ENCODE measurements at regions of chr17 and their contacts with region 1.

Region 1: DNA sequence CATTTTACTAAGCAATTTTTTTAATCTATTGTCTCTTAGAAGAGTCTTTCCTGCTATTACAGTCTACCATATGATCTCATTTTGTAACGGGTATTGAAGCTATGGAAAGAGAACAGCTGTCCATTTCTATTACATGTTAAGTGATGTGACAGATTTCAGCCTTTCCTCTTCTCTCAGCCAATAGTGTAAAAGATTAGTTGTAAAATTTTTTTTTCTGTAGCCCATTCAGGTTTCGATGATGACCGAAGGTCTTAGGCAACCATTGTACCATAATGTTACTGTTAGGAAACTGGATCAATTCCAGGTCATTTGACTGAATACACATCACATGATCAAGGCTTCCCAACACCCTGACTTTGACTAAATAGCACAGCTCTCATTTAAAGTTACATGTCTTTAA is 147.6 kb upstream of the HLF start:
- DNase-seq: no peak
- ATAC-seq: peak in 2 of 4 donors; percentile 26 to 58
- H3K4me3 ChIP-seq: no peak overlapping the region
- H3K27ac ChIP-seq: peak overlapping the region in 1 of 12 donors; percentile 4
- H3K4me1 ChIP-seq: peaks cover 0 to 15% (median 2%) of the 10 kb centered on the region in 12 donors
- H3K27me3 ChIP-seq: no peaks in the 10 kb centered on the region
- CTCF ChIP-seq: no peak
- POLR2A ChIP-seq: no peak

Region 2: GRCh38 chr17:55090079-55090492 is 27.1 kb before region 1 on chr17:
- intact Hi-C with region 1: no loop called
- DNase-seq: no peak
- ATAC-seq: no peak
- H3K4me3 ChIP-seq: no peak overlapping the region
- H3K27ac ChIP-seq: peak overlapping the region in 1 of 12 donors; percentile 28
- H3K4me1 ChIP-seq: peaks cover 0 to 21% (median 0%) of the 10 kb centered on the region in 12 donors
- H3K27me3 ChIP-seq: no peaks in the 10 kb centered on the region
- CTCF ChIP-seq: no peak
- POLR2A ChIP-seq: no peak

Region 3: GRCh38 chr17:55168958-55169687 is 52.0 kb after region 1 on chr17:
- intact Hi-C with region 1: loop called in 1 of 10 experiments (anchors 5 kb)
- DNase-seq: no peak
- ATAC-seq: no peak
- H3K4me3 ChIP-seq: no peak overlapping the region
- H3K27ac ChIP-seq: no peak overlapping the region
- H3K4me1 ChIP-seq: no peaks in the 10 kb centered on the region
- H3K27me3 ChIP-seq: no peaks in the 10 kb centered on the region
- CTCF ChIP-seq: no peak
- POLR2A ChIP-seq: no peak

Region 4: GRCh38 chr17:55186937-55187770 is 70.0 kb after region 1 on chr17:
- intact Hi-C with region 1: loop called in 1 of 10 experiments (anchors 10 kb)
- DNase-seq: no peak
- ATAC-seq: no peak
- H3K4me3 ChIP-seq: no peak overlapping the region
- H3K27ac ChIP-seq: no peak overlapping the region
- H3K4me1 ChIP-seq: no peaks in the 10 kb centered on the region
- H3K27me3 ChIP-seq: no peaks in the 10 kb centered on the region
- CTCF ChIP-seq: no peak
- POLR2A ChIP-seq: no peak